Activated T-helper 2 cell treated with anti-CD3 and anti-CD28 coated beads, Interferon-gamma antibody, Interleukin-2, Interleukin-4, amounts not matched to agents 10 μg/mL and 5 μg/mL and 100 μg/mL, durations not matched to agents 14 hours and 24 hours and 36 hours (primary cell): ENCODE measurements at regions of chr2 and their contacts with region 1.

Region 1: GRCh38 chr2:147297820-147298219 is 547.0 kb upstream of the ACVR2A start:
- DNase-seq: peak; percentile 40
- H3K4me3 Mint-ChIP-seq: peak overlapping the region; percentile 9
- H3K27ac Mint-ChIP-seq: peak overlapping the region; percentile 80
- H3K4me1 Mint-ChIP-seq: peaks cover 62% of the 10 kb centered on the region
- H3K27me3 Mint-ChIP-seq: no peaks in the 10 kb centered on the region

Region 2: DNA sequence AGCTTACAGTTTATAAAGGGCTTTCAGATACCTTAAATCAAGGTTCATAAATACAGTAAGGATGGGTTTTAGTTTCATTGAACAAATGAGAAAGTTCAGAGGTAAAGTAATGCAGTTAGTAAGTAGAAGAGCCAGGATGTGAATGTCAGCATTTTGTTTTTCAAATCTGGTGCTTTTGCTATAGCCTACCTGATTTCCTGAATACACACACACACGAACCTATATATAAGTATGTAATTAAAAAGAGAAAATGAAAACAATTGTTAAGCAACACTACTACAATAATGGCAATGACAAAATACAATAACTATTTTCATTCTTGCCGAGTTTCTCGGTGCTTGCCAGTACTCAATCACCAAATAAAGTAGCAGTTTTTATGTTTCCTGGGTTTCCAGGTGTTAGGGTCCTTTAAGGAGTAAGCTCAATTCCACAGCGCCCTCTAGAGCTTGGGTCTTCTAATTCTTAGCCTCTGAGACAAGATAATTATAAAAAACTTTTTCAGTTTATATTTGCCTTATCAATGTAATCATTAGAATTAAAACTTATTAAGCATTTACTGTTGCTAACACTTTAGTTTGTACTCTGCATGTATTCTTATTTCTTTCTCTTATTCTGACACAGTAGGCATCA is 34.1 kb after region 1 on chr2:
- intact Hi-C with region 1: loop called (anchors 1 kb)
- DNase-seq: no peak
- H3K4me3 Mint-ChIP-seq: no peak overlapping the region
- H3K27ac Mint-ChIP-seq: no peak overlapping the region
- H3K4me1 Mint-ChIP-seq: peaks cover 8% of the 10 kb centered on the region
- H3K27me3 Mint-ChIP-seq: peaks cover 7% of the 10 kb centered on the region

Region 3: GRCh38 chr2:147499785-147500184 is 202.0 kb after region 1 on chr2:
- intact Hi-C with region 1: loop called (anchors 2 kb)
- DNase-seq: no peak
- H3K4me3 Mint-ChIP-seq: peak overlapping the region; percentile 51
- H3K27ac Mint-ChIP-seq: peak overlapping the region; percentile 91
- H3K4me1 Mint-ChIP-seq: peaks cover 61% of the 10 kb centered on the region
- H3K27me3 Mint-ChIP-seq: no peaks in the 10 kb centered on the region

Region 4: DNA sequence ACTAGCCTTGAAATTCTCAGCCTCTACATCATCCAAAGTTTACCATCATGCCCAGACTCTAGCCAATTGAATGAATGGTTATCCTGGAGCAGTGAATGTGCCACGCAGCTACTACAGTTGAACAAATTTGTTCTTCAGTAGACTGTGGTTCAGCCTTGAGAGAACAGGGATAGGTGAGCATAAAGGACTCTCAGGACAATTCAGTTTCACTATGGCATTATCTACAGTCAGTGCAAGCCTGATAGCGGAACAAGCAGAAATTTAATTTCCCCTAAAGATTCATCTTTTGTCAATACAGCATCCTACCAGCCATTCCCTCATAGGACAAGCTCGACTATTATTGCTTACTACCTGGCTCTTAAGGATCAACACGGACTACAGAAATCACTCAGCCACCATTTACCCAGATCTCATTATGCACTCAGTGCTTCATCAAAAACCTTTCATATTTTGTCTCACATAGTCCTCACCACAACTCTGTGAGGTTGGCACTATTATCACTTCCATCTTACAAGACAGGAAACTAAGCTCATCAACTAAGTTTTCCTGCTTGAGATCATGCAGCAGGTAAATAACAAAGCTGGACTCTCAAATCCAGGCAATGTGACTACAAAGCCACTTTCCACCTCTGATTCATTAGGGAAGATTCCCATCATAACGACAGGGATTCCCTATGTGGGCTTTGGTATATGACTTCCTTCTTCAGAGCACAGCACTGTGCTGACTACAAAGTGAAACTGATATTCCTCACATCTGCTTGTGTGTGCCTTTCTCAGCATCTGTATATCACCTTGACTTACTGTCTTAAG is 365.5 kb after region 1 on chr2:
- intact Hi-C with region 1: loop called (anchors 5 kb)
- DNase-seq: peak; percentile 21
- H3K4me3 Mint-ChIP-seq: peak overlapping the region; percentile 47
- H3K27ac Mint-ChIP-seq: peak overlapping the region; percentile 54
- H3K4me1 Mint-ChIP-seq: peaks cover 37% of the 10 kb centered on the region
- H3K27me3 Mint-ChIP-seq: peaks cover 4% of the 10 kb centered on the region

Region 5: GRCh38 chr2:148020111-148021058 is 722.6 kb after region 1 on chr2 and contains the start of gene ORC4:
- intact Hi-C with region 1: loop called (anchors 10 kb)
- DNase-seq: peak; percentile 94
- H3K4me3 Mint-ChIP-seq: peak within 1 kb of the TSS; percentile 100
- H3K27ac Mint-ChIP-seq: peak within 1 kb of the TSS; percentile 93
- H3K4me1 Mint-ChIP-seq: peaks cover 44% of the 10 kb centered on the region
- H3K27me3 Mint-ChIP-seq: no peaks in the 10 kb centered on the region
- total RNA-seq, gene ORC4: 25.4 and 31.2 TPM in 2 replicates